ENCODE measurements at regions of chr2 and their contacts with region 1.

Region 1: GRCh38 chr2:230932556-230933511 is 7.8 kb upstream of the GPR55 start:
- DNase-seq: peak; percentile 28
- ATAC-seq: peak; percentile 79
- H3K4me3 ChIP-seq: no peak overlapping the region
- H3K27ac ChIP-seq: no peak overlapping the region
- H3K4me1 ChIP-seq: no peaks in the 10 kb centered on the region
- H3K27me3 ChIP-seq: peaks cover 24% of the 10 kb centered on the region
- CTCF ChIP-seq: no peak
- POLR2A ChIP-seq: no peak
- RAD21 ChIP-seq: no peak

Region 2: GRCh38 chr2:230885463-230886130 is 47.2 kb before region 1 on chr2:
- CTCF ChIA-PET with region 1: no interaction called
- POLR2A ChIA-PET with region 1: interaction called, 10 read pairs
- dilution Hi-C with region 1: no loop called
- in situ Hi-C with region 1: no loop called
- intact Hi-C with region 1: no loop called
- DNase-seq: peak; percentile 75
- ATAC-seq: peak; percentile 85
- H3K4me3 ChIP-seq: no peak overlapping the region
- H3K27ac ChIP-seq: no peak overlapping the region
- H3K4me1 ChIP-seq: no peaks in the 10 kb centered on the region; the same call in 1 of the 2 replicates
- H3K27me3 ChIP-seq: peaks cover 10% of the 10 kb centered on the region
- CTCF ChIP-seq: no peak
- POLR2A ChIP-seq: no peak
- RAD21 ChIP-seq: no peak

Measured in IMR-90 (cell line).